Aorta (tissue), 5 donors: ENCODE measurements at regions of chr14 and their contacts with region 1.

Region 1: DNA sequence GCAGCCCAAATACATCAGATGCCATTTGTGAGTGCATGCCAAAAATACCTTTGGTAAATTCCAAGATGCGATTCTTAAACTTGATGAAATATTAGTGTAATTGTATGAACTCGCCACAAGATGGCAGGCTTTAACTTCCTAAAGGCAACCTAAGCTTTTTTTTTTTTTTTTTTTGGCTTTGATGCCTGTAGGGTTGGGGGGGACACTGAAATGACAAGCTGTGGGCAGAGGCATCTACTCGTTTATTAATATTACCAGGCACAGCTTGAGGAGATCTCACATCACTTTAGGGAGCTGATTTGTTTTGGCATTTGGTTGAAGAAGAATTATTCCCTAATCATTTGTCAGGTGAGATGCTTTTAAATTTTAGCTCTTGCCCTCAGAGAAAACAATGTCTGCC is 126.7 kb upstream of the CCDC196 start:
- DNase-seq: no peak
- ATAC-seq: no peak
- H3K4me3 ChIP-seq: no peak overlapping the region
- H3K27ac ChIP-seq: no peak overlapping the region
- H3K4me1 ChIP-seq: no peaks in the 10 kb centered on the region
- H3K27me3 ChIP-seq: no peaks in the 10 kb centered on the region

Region 2: DNA sequence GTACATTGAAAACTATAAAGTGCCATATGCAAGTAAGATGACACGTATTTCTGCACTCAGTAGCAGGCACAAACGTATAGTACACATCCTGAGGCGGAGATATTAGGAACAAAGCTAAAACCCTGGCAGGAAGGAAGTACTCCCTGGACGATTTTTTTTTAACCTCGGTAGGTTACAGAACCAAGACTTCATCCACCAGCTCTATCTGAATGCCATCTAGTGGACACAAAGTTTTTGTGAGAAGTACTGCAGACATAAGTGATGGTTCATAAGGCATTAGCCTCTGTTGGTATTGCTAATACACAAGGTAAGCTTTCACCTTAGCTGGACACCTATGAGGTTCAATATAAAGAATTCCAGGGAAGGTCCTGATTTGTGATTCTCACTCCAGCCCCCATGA is 43.7 kb after region 1 on chr14:
- intact Hi-C with region 1: loop called (anchors 2 kb)
- DNase-seq: no peak
- ATAC-seq: peak; percentile 68
- H3K4me3 ChIP-seq: no peak overlapping the region
- H3K27ac ChIP-seq: no peak overlapping the region
- H3K4me1 ChIP-seq: peaks cover 0 to 7% of the 10 kb centered on the region in 2 donors
- H3K27me3 ChIP-seq: no peaks in the 10 kb centered on the region

Region 3: DNA sequence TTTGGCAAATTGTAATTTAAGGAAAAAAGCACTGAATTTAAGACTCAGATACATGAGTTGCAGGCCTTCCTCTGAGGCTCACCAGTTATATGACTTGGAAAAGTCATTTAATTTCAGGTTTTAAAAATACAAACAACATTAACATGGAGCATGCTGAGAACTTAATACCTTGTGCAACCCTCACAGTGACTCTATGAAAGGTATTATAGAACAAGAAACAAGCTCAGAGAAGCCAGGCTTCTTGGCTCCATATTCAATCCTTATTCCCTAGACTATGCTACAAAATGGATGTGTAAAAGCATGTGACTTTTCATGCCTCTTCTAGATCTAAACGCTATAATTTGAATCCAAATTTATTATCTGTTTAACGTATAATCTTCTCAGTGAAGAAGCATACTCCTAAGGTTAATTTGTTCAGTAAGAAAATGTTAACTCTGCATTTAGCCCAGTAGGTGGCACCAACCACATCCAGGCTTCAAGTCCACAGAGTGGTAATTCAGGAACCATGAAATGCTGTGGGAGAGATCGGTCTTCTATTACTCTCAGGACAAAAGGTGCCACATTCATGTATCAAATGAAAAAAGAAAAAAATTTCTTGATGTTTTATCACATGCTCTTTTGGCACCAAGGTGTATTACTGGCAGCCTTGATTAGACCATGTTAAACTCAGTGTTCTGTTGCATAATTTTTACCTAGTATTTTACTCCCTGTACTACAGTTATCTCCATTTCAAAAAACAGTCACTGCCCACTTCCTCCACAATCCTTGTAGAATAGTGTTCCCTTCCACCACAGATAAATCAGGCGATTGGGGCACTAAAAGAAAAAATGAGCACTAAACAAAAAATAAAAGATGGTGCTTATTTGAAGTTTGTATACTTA is 136.0 kb after region 1 on chr14:
- intact Hi-C with region 1: loop called in 1 of 2 experiments (anchors 10 kb)
- DNase-seq: peak in 1 of 2 donors; percentile 40
- ATAC-seq: peak; percentile 73
- H3K4me3 ChIP-seq: peak overlapping the region in 1 of 2 donors; percentile 41
- H3K27ac ChIP-seq: no peak overlapping the region
- H3K4me1 ChIP-seq: no peaks in the 10 kb centered on the region
- H3K27me3 ChIP-seq: no peaks in the 10 kb centered on the region